IMR-90 (cell line): ENCODE measurements at regions of chr14 and their contacts with region 1.

Region 1: GRCh38 chr14:102144914-102145313 is 5.2 kb downstream of the WDR20 start:
- DNase-seq: no peak
- ATAC-seq: no peak
- H3K4me3 ChIP-seq: no peak overlapping the region
- H3K27ac ChIP-seq: no peak overlapping the region
- H3K4me1 ChIP-seq: no peaks in the 10 kb centered on the region; the same call in 1 of the 2 replicates
- H3K27me3 ChIP-seq: no peaks in the 10 kb centered on the region
- CTCF ChIP-seq: no peak
- POLR2A ChIP-seq: no peak
- RAD21 ChIP-seq: no peak

Region 2: DNA sequence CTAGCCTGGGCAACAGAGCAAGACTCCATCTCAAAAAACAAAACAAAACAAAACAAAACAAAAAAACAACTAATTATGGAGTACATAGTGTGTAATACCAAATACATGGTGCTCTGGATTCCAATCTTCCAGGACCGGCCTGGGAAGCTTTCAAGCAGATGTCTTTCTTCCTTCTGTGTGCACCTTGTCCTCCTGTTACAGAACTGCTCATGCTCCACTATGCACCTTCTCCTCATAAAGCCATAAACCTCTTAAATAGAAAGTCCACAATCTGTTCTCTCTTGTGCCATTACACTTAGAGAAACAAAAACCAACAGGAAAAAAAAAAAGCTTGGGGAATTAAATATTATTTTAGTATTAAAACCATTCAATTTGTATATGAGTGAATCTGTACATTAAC is 147.5 kb after region 1 on chr14:
- CTCF ChIA-PET with region 1: no interaction called
- POLR2A ChIA-PET with region 1: no interaction called
- dilution Hi-C with region 1: no loop called
- in situ Hi-C with region 1: no loop called
- intact Hi-C with region 1: loop called (anchors 5 kb)
- DNase-seq: no peak
- ATAC-seq: no peak
- H3K4me3 ChIP-seq: no peak overlapping the region
- H3K27ac ChIP-seq: no peak overlapping the region
- H3K4me1 ChIP-seq: peaks cover 7% of the 10 kb centered on the region; the same call in 1 of the 2 replicates
- H3K27me3 ChIP-seq: no peaks in the 10 kb centered on the region
- CTCF ChIP-seq: no peak
- POLR2A ChIP-seq: no peak
- RAD21 ChIP-seq: no peak

Region 3: GRCh38 chr14:102524466-102525218 is 379.7 kb after region 1 on chr14:
- CTCF ChIA-PET with region 1: no interaction called
- POLR2A ChIA-PET with region 1: no interaction called
- dilution Hi-C with region 1: no loop called
- in situ Hi-C with region 1: no loop called
- intact Hi-C with region 1: no loop called
- DNase-seq: peak; percentile 98
- ATAC-seq: peak; percentile 99
- H3K4me3 ChIP-seq: peak overlapping the region; percentile 62
- H3K27ac ChIP-seq: peak overlapping the region; percentile 62
- H3K4me1 ChIP-seq: peaks cover 6% of the 10 kb centered on the region; the same call in 1 of the 2 replicates
- H3K27me3 ChIP-seq: no peaks in the 10 kb centered on the region
- CTCF ChIP-seq: peak; percentile 99
- POLR2A ChIP-seq: peak; percentile 33; the same call in 1 of the 2 replicates
- RAD21 ChIP-seq: peak; percentile 88

Region 4: DNA sequence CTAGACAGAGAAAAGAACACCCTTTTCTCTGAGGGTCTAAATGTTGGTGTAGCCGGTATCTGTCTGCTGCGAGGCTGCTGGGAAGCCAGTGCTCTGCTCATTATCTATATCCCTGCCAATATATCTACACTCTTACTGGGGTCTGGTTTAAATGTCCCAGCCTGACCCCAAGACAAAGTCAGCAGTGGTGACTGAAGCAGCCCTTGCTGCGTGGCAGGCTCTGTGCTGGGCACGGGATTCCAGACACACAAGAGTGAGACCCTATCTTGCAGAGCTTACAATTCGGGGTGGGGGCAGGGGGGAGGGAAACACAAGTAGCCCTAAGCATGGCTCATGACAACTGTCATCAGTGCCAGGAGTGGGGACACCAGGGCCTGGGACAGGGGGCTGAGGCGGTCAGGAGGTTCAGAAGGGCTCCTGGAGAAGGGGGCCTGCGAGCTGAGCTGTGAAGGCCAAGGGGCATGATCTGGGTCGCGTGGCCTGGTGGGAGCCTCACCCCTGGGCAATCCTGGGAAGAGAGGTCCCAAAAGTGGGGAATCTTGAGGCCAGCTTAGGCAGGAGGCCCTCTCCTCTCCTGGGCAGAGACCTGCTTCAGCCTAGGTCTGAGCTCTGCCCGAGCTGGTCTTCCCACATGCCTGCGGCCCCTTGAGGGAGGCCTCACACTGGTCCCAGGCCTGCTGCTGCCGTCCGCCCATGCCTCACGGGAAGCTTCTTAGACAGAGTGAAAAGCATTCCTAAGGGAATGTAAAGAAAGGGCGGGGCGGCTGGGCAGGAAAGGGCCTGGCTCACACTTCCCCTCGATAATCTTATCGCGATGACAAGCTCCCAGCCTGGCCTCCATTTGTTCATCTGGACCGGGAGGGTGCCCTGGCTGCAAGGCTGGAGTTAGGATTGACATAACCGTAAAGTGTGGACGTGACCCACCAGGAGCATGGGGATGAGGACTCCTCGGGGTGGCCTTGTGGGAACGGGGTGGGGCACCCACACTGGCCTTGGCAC is 440.3 kb after region 1 on chr14:
- CTCF ChIA-PET with region 1: no interaction called
- POLR2A ChIA-PET with region 1: no interaction called
- dilution Hi-C with region 1: no loop called
- in situ Hi-C with region 1: no loop called
- intact Hi-C with region 1: no loop called
- DNase-seq: no peak
- ATAC-seq: no peak
- H3K4me3 ChIP-seq: no peak overlapping the region
- H3K27ac ChIP-seq: no peak overlapping the region
- H3K4me1 ChIP-seq: peaks cover 7% of the 10 kb centered on the region
- H3K27me3 ChIP-seq: no peaks in the 10 kb centered on the region
- CTCF ChIP-seq: no peak
- POLR2A ChIP-seq: no peak
- RAD21 ChIP-seq: no peak

Region 5: GRCh38 chr14:102645746-102646440 is 501.0 kb after region 1 on chr14:
- CTCF ChIA-PET with region 1: no interaction called
- POLR2A ChIA-PET with region 1: no interaction called
- dilution Hi-C with region 1: no loop called
- in situ Hi-C with region 1: no loop called
- intact Hi-C with region 1: no loop called
- DNase-seq: peak; percentile 23
- ATAC-seq: peak; percentile 54
- H3K4me3 ChIP-seq: no peak overlapping the region
- H3K27ac ChIP-seq: no peak overlapping the region
- H3K4me1 ChIP-seq: peaks cover 7% of the 10 kb centered on the region
- H3K27me3 ChIP-seq: no peaks in the 10 kb centered on the region
- CTCF ChIP-seq: no peak
- POLR2A ChIP-seq: no peak
- RAD21 ChIP-seq: no peak